Vagina (tissue), 2 donors: ENCODE measurements at regions of chr6 and their contacts with region 1.

Region 1: GRCh38 chr6:30470968-30471367 is 18.3 kb upstream of the HLA-E start:
- DNase-seq: no peak
- H3K4me3 ChIP-seq: no peak overlapping the region
- H3K27ac ChIP-seq: no peak overlapping the region
- H3K4me1 ChIP-seq: peaks cover 8% of the 10 kb centered on the region
- H3K27me3 ChIP-seq: no peaks in the 10 kb centered on the region
- CTCF ChIP-seq: no peak
- POLR2A ChIP-seq: no peak

Region 2: DNA sequence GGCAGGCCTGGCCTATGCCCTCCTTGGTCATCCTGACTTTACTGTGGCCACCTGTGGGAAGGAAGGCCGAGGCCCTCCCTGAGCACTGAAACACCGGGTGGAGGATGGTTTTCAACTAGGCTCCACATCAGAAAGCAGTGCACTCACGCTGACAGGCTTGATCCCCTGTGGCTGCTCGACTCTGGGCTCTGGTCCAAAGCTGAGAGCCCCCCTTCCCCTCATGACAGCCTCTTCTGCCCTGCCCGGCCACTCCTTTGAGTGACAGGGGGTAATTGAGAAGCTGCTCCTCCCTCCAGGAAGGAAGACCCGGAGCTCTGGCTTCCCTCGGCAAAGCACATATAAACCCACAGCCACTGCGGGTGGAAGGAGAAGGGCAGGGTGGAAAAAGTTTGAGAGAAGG is 582.9 kb after region 1 on chr6:
- intact Hi-C with region 1: loop called (anchors 5 kb)
- DNase-seq: no peak
- H3K4me3 ChIP-seq: peak overlapping the region in 1 of 2 donors; percentile 24
- H3K27ac ChIP-seq: no peak overlapping the region
- H3K4me1 ChIP-seq: peaks cover 23% of the 10 kb centered on the region
- H3K27me3 ChIP-seq: no peaks in the 10 kb centered on the region
- CTCF ChIP-seq: no peak
- POLR2A ChIP-seq: no peak